Activated CD4-positive, alpha-beta T cell treated with anti-CD3 and anti-CD28 coated beads, Interleukin-2, amount 10 ng/mL, durations not matched to agents 24 days and 14 days (primary cell): ENCODE measurements at regions of chr13 and their contacts with region 1.

Region 1: DNA sequence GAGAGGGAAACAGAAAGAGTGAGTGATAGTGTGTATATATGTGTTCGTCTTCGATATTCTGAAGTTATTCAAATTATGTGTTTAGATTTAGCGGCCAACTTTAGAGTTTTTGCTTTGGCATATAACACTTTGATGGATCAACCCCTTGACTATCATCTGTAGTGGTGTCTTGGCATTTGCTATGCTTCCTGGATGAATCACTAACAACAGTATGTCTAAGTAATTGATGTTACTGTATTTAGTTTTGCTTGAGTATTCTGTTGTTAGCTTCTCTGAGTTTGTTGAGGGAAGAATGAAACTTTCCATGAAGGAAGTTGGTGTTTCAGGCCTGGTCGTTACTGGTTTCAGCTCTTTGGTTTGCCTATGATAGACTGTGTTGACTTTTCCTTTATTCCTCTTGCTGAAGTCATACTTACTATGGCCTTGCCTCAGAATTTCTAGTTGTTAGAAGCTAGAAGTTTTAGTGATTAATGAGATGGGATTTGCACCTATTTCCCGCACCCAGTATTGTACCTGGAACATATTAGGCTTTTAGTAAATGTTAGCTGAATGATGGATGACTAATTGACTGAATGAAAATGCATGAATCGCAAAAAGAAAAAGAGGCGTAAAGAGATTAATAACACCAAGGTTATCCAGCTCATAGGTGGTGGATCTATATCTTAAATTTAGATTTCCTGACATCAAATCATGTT is 20.7 kb downstream of the NDFIP2 start:
- DNase-seq: peak; percentile 55
- H3K4me3 Mint-ChIP-seq: peak overlapping the region; percentile 56
- H3K27ac Mint-ChIP-seq: peak overlapping the region; percentile 90
- H3K4me1 Mint-ChIP-seq: peaks cover 75% of the 10 kb centered on the region
- H3K27me3 Mint-ChIP-seq: no peaks in the 10 kb centered on the region

Region 2: GRCh38 chr13:79160818-79161217 is 340.9 kb before region 1 on chr13:
- intact Hi-C with region 1: no loop called
- DNase-seq: no peak
- H3K4me3 Mint-ChIP-seq: no peak overlapping the region
- H3K27ac Mint-ChIP-seq: no peak overlapping the region
- H3K4me1 Mint-ChIP-seq: no peaks in the 10 kb centered on the region
- H3K27me3 Mint-ChIP-seq: peaks cover 9% of the 10 kb centered on the region

Region 3: GRCh38 chr13:79187917-79188690 is 313.6 kb before region 1 on chr13:
- intact Hi-C with region 1: no loop called
- DNase-seq: no peak
- H3K4me3 Mint-ChIP-seq: no peak overlapping the region
- H3K27ac Mint-ChIP-seq: no peak overlapping the region
- H3K4me1 Mint-ChIP-seq: peaks cover 21% of the 10 kb centered on the region
- H3K27me3 Mint-ChIP-seq: peaks cover 14% of the 10 kb centered on the region

Region 4: GRCh38 chr13:79486433-79487188 is 15.1 kb before region 1 on chr13:
- intact Hi-C with region 1: loop called (anchors 2 kb)
- DNase-seq: no peak
- H3K4me3 Mint-ChIP-seq: peak overlapping the region; percentile 69
- H3K27ac Mint-ChIP-seq: peak overlapping the region; percentile 94
- H3K4me1 Mint-ChIP-seq: peaks cover 74% of the 10 kb centered on the region
- H3K27me3 Mint-ChIP-seq: peaks cover 2% of the 10 kb centered on the region

Region 5: DNA sequence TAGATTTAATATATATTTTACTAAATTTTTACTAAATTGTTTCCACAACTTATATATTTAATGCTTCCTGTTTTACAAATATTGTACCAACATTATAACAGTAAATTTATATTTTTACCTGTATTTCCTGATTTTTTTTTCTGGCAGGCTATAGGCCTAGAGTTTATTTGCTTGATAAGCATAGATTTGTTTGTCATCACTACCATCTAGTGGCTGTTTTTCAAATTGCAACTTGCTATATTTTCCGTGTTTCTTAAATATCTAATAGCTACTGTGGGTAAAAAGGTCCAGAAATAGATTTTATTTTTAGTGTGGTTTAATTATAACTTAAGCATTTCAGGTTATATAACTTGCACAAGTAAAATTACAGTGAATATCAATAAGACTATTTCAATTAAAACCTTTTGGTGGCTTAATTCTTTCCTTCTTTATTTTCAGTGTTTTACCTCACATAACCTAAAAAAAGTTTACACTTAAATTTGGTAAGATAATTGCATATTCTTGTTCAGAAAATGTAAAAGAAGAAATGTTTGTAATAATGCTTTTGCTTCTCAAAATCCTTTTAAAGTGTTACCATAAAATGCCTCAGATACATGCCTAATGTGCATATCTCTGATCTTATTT is 39.9 kb after region 1 on chr13:
- intact Hi-C with region 1: loop called (anchors 1 kb)
- DNase-seq: peak; percentile 77
- H3K4me3 Mint-ChIP-seq: no peak overlapping the region
- H3K27ac Mint-ChIP-seq: no peak overlapping the region
- H3K4me1 Mint-ChIP-seq: peaks cover 19% of the 10 kb centered on the region
- H3K27me3 Mint-ChIP-seq: no peaks in the 10 kb centered on the region